ENCODE measurements at regions of chr2 and their contacts with region 1.

Region 1: GRCh38 chr2:189287982-189288521 is 108.5 kb upstream of the COL5A2 start:
- DNase-seq: no peak
- H3K4me3 ChIP-seq: no peak overlapping the region
- H3K27ac ChIP-seq: peak overlapping the region in 2 of 4 donors; percentile 14 to 28
- H3K4me1 ChIP-seq: peaks cover 0 to 13% (median 1%) of the 10 kb centered on the region in 4 donors
- H3K27me3 ChIP-seq: no peaks in the 10 kb centered on the region
- CTCF ChIP-seq: peak; percentile 35 to 56 (median 42)
- EP300 ChIP-seq: no peak
- POLR2A ChIP-seq: no peak

Region 2: DNA sequence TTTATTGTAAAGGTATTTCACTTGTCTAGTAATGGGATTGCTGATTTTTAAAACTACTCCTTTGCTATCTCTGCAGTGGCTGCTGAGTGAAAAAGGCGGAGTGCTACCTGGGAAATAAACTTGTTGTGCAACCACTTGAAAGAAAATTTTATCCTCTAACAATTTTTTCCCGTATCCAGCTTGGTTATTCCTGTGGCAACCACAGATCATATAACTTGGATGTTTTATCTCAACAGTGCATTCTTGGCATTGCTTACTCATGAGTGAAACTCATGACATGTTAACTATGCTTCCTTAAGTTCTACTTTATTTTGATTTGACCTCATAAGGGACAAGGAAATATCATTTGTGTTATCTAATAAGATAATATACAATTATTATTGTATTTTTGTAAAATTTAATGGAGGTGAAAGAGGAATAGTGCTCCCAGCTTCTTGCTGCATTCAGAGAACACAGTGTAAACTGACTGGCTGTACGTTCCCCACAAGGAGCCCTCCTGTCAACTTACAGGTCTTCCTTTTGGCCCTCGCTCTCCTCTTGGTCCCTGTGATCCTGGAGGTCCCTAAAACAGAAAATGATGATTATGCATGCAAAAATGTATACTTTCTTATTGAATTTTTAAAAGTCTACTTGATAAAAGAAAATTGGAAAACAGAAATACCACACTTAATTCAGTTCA is 191.1 kb before region 1 on chr2:
- in situ Hi-C with region 1: loop called in 2 of 4 experiments (anchors 10 to 25 kb)
- intact Hi-C with region 1: no loop called
- DNase-seq: no peak
- H3K4me3 ChIP-seq: no peak overlapping the region
- H3K27ac ChIP-seq: peak overlapping the region in 3 of 4 donors; percentile 21 to 42 (median 32)
- H3K4me1 ChIP-seq: peaks cover 0 to 11% (median 3%) of the 10 kb centered on the region in 4 donors
- H3K27me3 ChIP-seq: no peaks in the 10 kb centered on the region
- CTCF ChIP-seq: no peak
- EP300 ChIP-seq: no peak
- POLR2A ChIP-seq: no peak

Region 3: DNA sequence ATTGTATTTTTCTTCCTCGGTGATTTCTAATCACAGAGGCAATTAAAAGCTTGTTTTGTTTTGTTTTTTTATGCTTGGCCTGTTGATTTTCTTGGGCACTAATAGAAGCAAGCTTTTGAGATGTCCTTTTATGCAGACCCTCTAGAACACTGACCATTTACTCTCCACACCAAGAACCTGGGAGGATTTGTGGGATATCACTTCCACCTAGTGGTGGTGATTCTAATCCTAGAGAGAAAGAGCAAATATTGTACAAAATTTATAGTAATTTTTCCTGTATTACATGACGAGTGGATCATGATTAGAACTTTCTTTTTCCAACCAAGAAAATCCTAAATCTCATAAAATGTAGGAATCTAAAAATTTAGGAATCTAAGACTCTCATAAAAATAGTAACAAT is 1223.1 kb after region 1 on chr2:
- in situ Hi-C with region 1: no loop called
- intact Hi-C with region 1: no loop called
- DNase-seq: no peak
- H3K4me3 ChIP-seq: no peak overlapping the region
- H3K27ac ChIP-seq: peak overlapping the region in 1 of 4 donors; percentile 74
- H3K4me1 ChIP-seq: peaks cover 0 to 28% (median 22%) of the 10 kb centered on the region in 4 donors
- H3K27me3 ChIP-seq: no peaks in the 10 kb centered on the region
- CTCF ChIP-seq: peak; percentile 24 to 65 (median 48)
- EP300 ChIP-seq: no peak
- POLR2A ChIP-seq: no peak